ENCODE measurements at regions of chr7 and their contacts with region 1.

Region 1: GRCh38 chr7:99504603-99505323 is at the start of gene ZKSCAN5:
- DNase-seq: peak; percentile 98
- ATAC-seq: peak; percentile 84
- H3K4me3 Mint-ChIP-seq: peak within 1 kb of the TSS; percentile 85
- H3K27ac Mint-ChIP-seq: peak within 1 kb of the TSS; percentile 95
- H3K4me1 Mint-ChIP-seq: peaks cover 32% of the 10 kb centered on the region
- H3K27me3 Mint-ChIP-seq: no peaks in the 10 kb centered on the region
- total RNA-seq, gene ZKSCAN5: 13.9 TPM

Region 2: GRCh38 chr7:99476107-99476506 is 28.7 kb before region 1 on chr7:
- CTCF ChIA-PET with region 1: interaction called, 4 read pairs
- POLR2A ChIA-PET with region 1: interaction called, 15 read pairs
- DNase-seq: no peak
- ATAC-seq: no peak
- H3K4me3 Mint-ChIP-seq: no peak overlapping the region
- H3K27ac Mint-ChIP-seq: no peak overlapping the region
- H3K4me1 Mint-ChIP-seq: peaks cover 53% of the 10 kb centered on the region
- H3K27me3 Mint-ChIP-seq: peaks cover 1% of the 10 kb centered on the region

Region 3: GRCh38 chr7:99551767-99552463 is 47.2 kb after region 1 on chr7 and contains the start of gene FAM200A:
- CTCF ChIA-PET with region 1: no interaction called
- POLR2A ChIA-PET with region 1: interaction called, 57 read pairs
- DNase-seq: peak; percentile 90
- ATAC-seq: peak; percentile 99
- H3K4me3 Mint-ChIP-seq: peak within 1 kb of the TSS; percentile 92
- H3K27ac Mint-ChIP-seq: peak within 1 kb of the TSS; percentile 95
- H3K4me1 Mint-ChIP-seq: peaks cover 39% of the 10 kb centered on the region
- H3K27me3 Mint-ChIP-seq: no peaks in the 10 kb centered on the region
- total RNA-seq, gene FAM200A: 5.1 to 5.4 TPM

Measured in activated CD8-positive, alpha-beta T cell treated with anti-CD3 and anti-CD28 coated beads, Interleukin-2, amount 10 ng/mL, durations not matched to agents 7 days and 5 days (primary cell).